ENCODE measurements at regions of chr1 and their contacts with region 1.

Region 1: DNA sequence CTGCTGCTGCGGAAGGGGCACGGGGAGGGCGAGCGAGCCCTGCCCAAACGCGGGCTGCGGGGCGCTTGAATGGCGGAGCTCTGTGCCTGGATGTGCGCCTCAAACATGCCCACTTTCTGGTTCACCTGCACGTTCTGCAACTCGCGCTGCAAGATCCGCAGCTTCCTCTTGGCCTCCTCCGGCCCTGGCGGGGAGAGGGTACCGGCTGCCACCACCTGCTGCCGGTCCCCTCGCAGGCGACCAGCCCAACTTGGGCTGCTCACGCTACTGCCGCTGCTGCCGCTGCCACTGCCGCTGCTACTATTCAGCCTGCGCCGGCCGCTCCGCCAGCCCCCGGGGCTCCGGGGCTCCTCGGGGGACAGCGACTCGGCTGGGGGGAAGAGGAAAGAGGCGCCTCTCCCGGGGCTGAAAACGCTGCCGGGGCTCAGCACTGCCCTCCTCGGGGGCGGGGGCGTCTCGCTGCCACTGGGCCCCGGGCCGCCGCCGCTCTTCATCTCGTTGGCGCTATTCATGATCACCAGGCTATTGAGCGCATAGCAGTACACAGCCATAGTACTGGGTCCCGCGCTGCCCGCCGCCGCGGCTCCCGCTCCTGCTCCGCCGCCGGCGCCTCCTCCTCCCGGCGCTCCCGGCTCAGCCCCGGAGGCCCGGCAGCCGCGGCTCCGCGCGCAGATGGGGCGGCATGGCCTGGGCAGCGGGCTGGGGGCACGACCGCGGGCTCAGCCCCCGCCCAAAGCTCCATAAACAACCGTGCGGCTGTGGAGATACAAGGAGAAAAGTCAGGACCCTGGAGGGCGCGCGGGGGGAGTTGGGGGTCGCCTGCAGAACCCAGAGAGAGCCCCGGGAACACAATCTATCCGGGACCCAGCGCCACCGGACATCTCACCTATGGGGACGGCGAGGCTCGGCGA is 1.9 kb downstream of the ITPKB start:
- DNase-seq: peak; percentile 78
- H3K4me3 ChIP-seq: peak overlapping the region; percentile 83 to 94 (median 86)
- H3K27ac ChIP-seq: peak overlapping the region; percentile 90 to 97 (median 94)
- H3K4me1 ChIP-seq: peaks cover 0 to 58% (median 55%) of the 10 kb centered on the region in 4 donors
- H3K27me3 ChIP-seq: no peaks in the 10 kb centered on the region
- CTCF ChIP-seq: no peak
- EP300 ChIP-seq: no peak
- POLR2A ChIP-seq: peak in 1 of 2 donors; percentile 15

Region 2: DNA sequence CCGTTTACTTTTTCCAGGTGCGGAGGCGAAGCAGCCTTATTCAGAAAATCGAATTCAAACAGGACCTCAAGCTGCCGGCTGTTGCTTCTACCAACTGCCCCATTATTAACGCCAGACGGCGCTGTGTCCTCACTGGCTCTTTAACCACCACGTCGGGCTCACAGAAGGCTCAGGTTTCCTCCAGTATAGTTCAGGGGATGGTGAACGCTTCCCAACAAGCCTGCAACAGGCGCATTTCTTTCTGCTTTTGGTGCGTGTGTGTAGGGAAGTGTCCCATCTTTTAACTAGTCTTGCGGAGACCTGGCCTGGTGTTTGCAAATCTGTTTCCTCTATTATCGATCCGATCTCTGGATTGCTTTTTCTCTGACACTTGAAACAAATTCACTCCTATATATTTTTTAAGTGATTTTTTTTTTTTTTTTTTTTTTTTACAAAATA is 189.4 kb before region 1 on chr1:
- intact Hi-C with region 1: loop called (anchors 5 kb)
- DNase-seq: peak; percentile 95
- H3K4me3 ChIP-seq: peak overlapping the region in 3 of 4 donors; percentile 73 to 76 (median 75)
- H3K27ac ChIP-seq: peak overlapping the region; percentile 79 to 93 (median 91)
- H3K4me1 ChIP-seq: peaks cover 0 to 59% (median 43%) of the 10 kb centered on the region in 4 donors
- H3K27me3 ChIP-seq: peaks cover 0 to 8% (median 0%) of the 10 kb centered on the region in 3 donors
- CTCF ChIP-seq: peak; percentile 88 to 92 (median 90)
- EP300 ChIP-seq: no peak
- POLR2A ChIP-seq: peak in 1 of 2 donors; percentile 7

Region 3: DNA sequence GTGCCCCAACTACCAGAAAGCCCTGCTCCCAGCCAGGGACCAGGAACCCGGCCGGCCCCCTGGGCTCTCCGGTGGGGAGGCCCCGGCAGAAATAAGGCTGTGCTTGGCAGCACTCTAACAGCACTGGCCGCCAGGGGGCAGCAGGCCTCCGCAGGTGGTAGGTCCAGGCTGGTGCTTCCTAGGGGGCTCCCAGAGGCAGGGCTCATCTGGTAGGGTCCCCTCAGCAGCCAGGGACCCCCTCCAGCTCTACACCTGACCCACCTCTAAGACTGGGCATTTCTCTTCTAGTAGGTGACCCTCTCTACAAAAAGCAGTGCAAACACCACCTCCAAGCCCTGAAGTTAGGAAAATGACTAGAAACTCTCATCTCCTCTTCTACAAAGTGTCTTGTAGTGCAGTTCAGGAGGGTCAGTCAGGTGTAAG is 103.0 kb before region 1 on chr1:
- intact Hi-C with region 1: loop called (anchors 2 kb)
- DNase-seq: peak; percentile 93
- H3K4me3 ChIP-seq: no peak overlapping the region
- H3K27ac ChIP-seq: peak overlapping the region; percentile 75 to 85 (median 80)
- H3K4me1 ChIP-seq: peaks cover 0 to 62% (median 57%) of the 10 kb centered on the region in 4 donors
- H3K27me3 ChIP-seq: no peaks in the 10 kb centered on the region
- CTCF ChIP-seq: peak; percentile 80 to 97 (median 94)
- EP300 ChIP-seq: no peak
- POLR2A ChIP-seq: no peak

Region 4: GRCh38 chr1:226702957-226703831 is 34.0 kb before region 1 on chr1:
- intact Hi-C with region 1: loop called (anchors 5 kb)
- DNase-seq: peak; percentile 89
- H3K4me3 ChIP-seq: peak overlapping the region; percentile 37 to 57 (median 54)
- H3K27ac ChIP-seq: peak overlapping the region in 1 of 4 donors; percentile 91
- H3K4me1 ChIP-seq: peaks cover 0 to 83% (median 81%) of the 10 kb centered on the region in 4 donors
- H3K27me3 ChIP-seq: no peaks in the 10 kb centered on the region
- CTCF ChIP-seq: no peak
- EP300 ChIP-seq: peak in 1 of 4 donors; percentile 2
- POLR2A ChIP-seq: peak; percentile 20 to 46

Region 5: GRCh38 chr1:226786550-226786949 is 49.4 kb after region 1 on chr1:
- intact Hi-C with region 1: loop called (anchors 5 kb)
- DNase-seq: no peak
- H3K4me3 ChIP-seq: no peak overlapping the region
- H3K27ac ChIP-seq: peak overlapping the region; percentile 57 to 90 (median 87)
- H3K4me1 ChIP-seq: peaks cover 0 to 61% (median 48%) of the 10 kb centered on the region in 4 donors
- H3K27me3 ChIP-seq: no peaks in the 10 kb centered on the region
- CTCF ChIP-seq: no peak
- EP300 ChIP-seq: no peak
- POLR2A ChIP-seq: no peak

Region 6: DNA sequence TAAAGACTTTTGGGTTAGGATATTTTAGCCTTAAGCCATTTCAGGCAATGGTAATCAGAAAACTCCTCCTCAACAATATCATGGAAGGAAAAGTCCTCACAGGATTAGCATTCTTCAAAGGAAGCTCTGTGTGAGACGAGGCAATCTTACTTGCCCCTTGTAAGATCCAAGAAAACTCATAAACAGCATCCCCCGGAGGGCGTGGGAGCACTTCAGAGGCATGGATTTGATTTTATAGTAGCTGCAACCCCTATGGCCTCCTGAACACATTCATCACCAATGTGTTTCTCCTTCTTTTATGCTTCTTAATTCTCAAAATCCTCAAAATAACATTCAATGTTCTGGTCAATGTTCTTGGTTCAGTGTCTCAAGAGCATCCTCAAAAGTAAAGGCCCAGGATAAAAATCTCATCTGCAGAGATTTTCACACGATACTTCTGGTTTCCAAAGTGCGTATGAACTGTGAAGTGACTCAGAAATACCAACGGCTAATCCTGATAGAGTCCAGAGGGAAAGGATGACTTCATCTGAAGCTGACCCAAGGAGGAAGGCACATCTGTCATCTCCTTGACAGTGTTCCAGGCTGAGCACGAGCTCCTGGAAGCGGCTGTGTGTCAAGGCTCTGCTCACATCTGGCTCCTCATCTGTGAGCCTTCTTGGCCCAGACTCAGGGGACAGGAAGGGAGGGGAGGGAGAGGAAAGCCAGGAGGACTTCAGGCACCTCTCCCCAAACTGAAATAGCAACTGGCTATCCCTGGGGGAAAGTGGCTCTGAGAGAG is 84.0 kb after region 1 on chr1:
- intact Hi-C with region 1: loop called (anchors 2 kb)
- DNase-seq: peak; percentile 99
- H3K4me3 ChIP-seq: no peak overlapping the region
- H3K27ac ChIP-seq: peak overlapping the region; percentile 87 to 93 (median 90)
- H3K4me1 ChIP-seq: peaks cover 0 to 34% (median 28%) of the 10 kb centered on the region in 4 donors
- H3K27me3 ChIP-seq: no peaks in the 10 kb centered on the region
- CTCF ChIP-seq: no peak
- EP300 ChIP-seq: peak; percentile 97 to 100 (median 98)
- POLR2A ChIP-seq: no peak